ENCODE measurements at regions of chr12 and their contacts with region 1.

Region 1: GRCh38 chr12:121196902-121197301 is 13.0 kb upstream of the P2RX4 start:
- DNase-seq: no peak
- H3K4me3 ChIP-seq: no peak overlapping the region
- H3K27ac ChIP-seq: no peak overlapping the region
- H3K4me1 ChIP-seq: no peaks in the 10 kb centered on the region
- H3K27me3 ChIP-seq: no peaks in the 10 kb centered on the region
- CTCF ChIP-seq: no peak
- EP300 ChIP-seq: no peak
- POLR2A ChIP-seq: no peak
- RAD21 ChIP-seq: no peak

Region 2: GRCh38 chr12:121184425-121184824 is 12.5 kb before region 1 on chr12:
- CTCF ChIA-PET with region 1: interaction called, 12 read pairs
- POLR2A ChIA-PET with region 1: no interaction called
- DNase-seq: peak in 1 of 2 experiments; percentile 51
- H3K4me3 ChIP-seq: no peak overlapping the region
- H3K27ac ChIP-seq: no peak overlapping the region
- H3K4me1 ChIP-seq: no peaks in the 10 kb centered on the region
- H3K27me3 ChIP-seq: no peaks in the 10 kb centered on the region
- CTCF ChIP-seq: no peak
- EP300 ChIP-seq: no peak
- POLR2A ChIP-seq: no peak
- RAD21 ChIP-seq: no peak